OCI-LY7 (cell line): ENCODE measurements at regions of chr16 and their contacts with region 1.

Region 1: GRCh38 chr16:68448360-68448970 is at the start of gene SMPD3:
- DNase-seq: peak; percentile 100
- H3K4me3 ChIP-seq: peak within 1 kb of the TSS; percentile 60
- H3K27ac ChIP-seq: no peak within 1 kb of the TSS
- H3K4me1 ChIP-seq: peaks cover 14% of the 10 kb centered on the region
- CTCF ChIP-seq: no peak
- total RNA-seq, gene SMPD3: 0.16 and 0.21 TPM in 2 replicates

Region 2: GRCh38 chr16:68396481-68396880 is 52.0 kb before region 1 on chr16:
- CTCF ChIA-PET with region 1: no interaction called
- POLR2A ChIA-PET with region 1: no interaction called
- intact Hi-C with region 1: loop called (anchors 5 kb)
- DNase-seq: peak; percentile 63
- H3K4me3 ChIP-seq: no peak overlapping the region
- H3K27ac ChIP-seq: no peak overlapping the region
- H3K4me1 ChIP-seq: no peaks in the 10 kb centered on the region
- CTCF ChIP-seq: peak; percentile 78

Region 3: GRCh38 chr16:68490829-68491575 is 42.5 kb after region 1 on chr16:
- CTCF ChIA-PET with region 1: no interaction called
- POLR2A ChIA-PET with region 1: no interaction called
- intact Hi-C with region 1: loop called (anchors 5 kb)
- DNase-seq: peak; percentile 85
- H3K4me3 ChIP-seq: peak overlapping the region; percentile 61
- H3K27ac ChIP-seq: peak overlapping the region; percentile 79
- H3K4me1 ChIP-seq: peaks cover 75% of the 10 kb centered on the region
- CTCF ChIP-seq: no peak

Region 4: GRCh38 chr16:68510775-68511174 is 62.3 kb after region 1 on chr16:
- CTCF ChIA-PET with region 1: no interaction called
- POLR2A ChIA-PET with region 1: no interaction called
- intact Hi-C with region 1: loop called (anchors 2 kb)
- DNase-seq: no peak
- H3K4me3 ChIP-seq: no peak overlapping the region
- H3K27ac ChIP-seq: no peak overlapping the region
- H3K4me1 ChIP-seq: no peaks in the 10 kb centered on the region
- CTCF ChIP-seq: no peak

Region 5: GRCh38 chr16:68520649-68521086 is 72.2 kb after region 1 on chr16:
- CTCF ChIA-PET with region 1: no interaction called
- POLR2A ChIA-PET with region 1: no interaction called
- intact Hi-C with region 1: loop called (anchors 5 kb)
- DNase-seq: peak; percentile 93
- H3K4me3 ChIP-seq: peak overlapping the region; percentile 24
- H3K27ac ChIP-seq: no peak overlapping the region
- H3K4me1 ChIP-seq: peaks cover 15% of the 10 kb centered on the region
- CTCF ChIP-seq: peak; percentile 98

Region 6: DNA sequence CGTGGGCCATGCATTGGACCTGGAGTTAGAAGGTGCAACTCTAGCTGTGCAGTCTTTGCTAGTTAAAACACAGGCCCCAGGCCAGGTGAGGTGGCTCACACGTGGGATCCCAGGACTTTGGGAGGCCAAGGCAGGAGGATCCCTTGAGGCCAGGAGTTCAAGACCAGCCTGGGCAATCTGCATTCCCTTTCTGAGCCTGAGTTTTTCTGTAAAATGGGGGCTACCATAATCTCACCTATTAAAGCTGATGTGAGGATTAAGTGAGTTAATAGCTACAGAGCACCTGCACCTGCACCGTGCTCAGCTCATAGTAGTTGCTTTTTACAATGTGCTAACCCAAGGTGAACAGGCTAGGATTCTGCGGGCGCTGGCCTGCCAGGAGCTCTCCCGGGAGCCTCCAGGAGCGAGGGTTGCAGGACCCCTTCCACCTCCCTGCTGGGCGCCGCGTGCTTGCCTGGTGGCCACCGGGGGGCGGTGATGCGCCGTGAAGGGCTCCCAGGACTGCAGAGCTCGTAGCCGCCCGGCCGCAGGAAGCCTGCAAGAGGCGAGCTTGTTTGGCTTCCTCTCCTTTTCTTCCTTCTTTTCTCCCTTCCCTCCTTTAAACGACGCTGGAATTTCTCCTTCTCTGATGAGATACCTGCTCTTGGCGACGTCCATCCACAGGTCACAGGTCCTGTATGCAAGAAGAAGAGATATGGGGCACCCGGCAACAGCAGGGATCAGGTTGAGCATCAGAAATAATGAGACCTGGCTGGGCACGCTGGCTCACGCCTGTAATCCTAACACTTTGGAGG is 141.9 kb after region 1 on chr16:
- CTCF ChIA-PET with region 1: no interaction called
- POLR2A ChIA-PET with region 1: no interaction called
- intact Hi-C with region 1: loop called (anchors 10 kb)
- DNase-seq: peak; percentile 34
- H3K4me3 ChIP-seq: no peak overlapping the region
- H3K27ac ChIP-seq: no peak overlapping the region
- H3K4me1 ChIP-seq: no peaks in the 10 kb centered on the region
- CTCF ChIP-seq: peak; percentile 67